HCT116 (cell line): ENCODE measurements at regions of chr19 and their contacts with region 1.

Region 1: DNA sequence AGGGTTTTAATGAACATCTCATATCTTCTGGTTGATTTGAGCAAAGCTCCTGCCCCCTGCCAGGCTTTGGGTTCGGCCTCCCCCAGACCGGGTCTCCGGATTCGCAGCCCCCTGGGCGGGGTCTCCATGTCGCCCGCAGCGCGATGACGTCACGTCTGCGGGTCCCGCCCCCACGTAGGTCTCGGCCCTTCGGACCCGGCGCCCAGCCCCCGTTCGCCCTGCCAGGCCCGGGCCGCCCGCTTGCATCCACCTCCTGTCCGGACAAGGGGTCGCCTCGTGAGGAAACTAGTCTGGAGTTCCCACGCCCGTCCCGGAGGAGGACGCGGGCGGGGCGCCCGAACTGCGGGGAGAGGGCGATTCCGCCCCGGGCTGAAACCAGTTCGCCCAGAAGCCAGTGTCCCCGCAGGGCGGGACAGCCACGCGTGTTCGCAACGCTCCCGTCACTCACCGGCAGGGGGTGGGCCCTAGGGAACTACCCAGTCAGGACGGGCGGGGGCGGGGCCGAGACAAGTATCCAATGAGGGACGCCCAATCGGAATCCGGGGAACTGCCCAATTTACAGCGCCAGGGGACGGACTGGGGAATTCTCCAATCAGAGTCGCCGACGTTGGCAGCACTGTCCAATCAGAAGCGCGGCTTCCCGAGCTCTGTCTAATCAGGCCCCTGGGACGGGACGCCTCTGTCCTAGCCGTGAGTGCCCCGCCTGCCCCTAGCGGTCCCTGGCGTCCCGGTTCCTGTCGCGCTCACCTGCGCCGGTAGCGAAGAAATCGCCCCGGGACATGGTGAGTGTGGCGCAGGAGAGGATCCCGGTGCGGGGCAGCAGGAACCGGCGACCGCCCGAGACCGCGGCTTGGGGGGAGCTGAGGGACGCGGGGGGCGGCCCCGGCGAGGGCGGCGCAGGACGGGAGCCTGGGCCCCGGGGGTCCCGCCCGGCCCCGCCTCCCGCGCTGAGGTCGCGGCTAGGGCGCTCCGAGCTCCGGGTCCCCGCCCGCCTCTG is at the start of gene ZNF555:
- DNase-seq: peak; percentile 98
- ATAC-seq: peak; percentile 99
- H3K4me3 ChIP-seq: peak within 1 kb of the TSS; percentile 53 to 64
- H3K27ac ChIP-seq: peak within 1 kb of the TSS; percentile 67; the same call in 1 of the 2 replicates
- H3K4me1 ChIP-seq: peaks cover 0 to 12% of the 10 kb centered on the region in 2 experiments; a peak in 2 of 4 replicates
- H3K27me3 ChIP-seq: no peaks in the 10 kb centered on the region
- CTCF ChIP-seq: peak in 2 of 3 experiments; percentile 33 to 56; a peak in 3 of 6 replicates
- POLR2A ChIP-seq: no peak
- RAD21 ChIP-seq: no peak
- total RNA-seq, gene ZNF555: 4.5 TPM

Region 2: DNA sequence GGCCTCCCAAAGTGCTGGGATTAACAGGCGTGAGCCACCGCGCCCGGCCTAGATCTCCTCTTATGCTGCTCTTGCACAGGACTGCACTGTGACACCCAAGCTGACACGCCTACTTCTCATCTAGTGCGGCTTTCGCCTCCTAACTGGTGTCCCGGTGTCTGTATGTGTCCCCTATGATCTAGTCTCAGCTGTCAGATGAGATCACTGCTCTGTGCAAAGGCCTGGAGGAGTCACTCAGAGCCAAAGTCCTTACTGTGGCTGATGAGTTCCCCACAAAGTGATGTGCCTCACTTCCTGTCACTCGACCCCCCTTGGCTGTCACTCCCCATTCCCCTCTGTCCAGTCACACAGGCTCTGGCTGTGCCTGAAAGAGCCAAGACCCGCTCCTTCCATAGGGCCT is 28.5 kb after region 1 on chr19:
- CTCF ChIA-PET with region 1: no interaction called
- POLR2A ChIA-PET with region 1: no interaction called
- RAD21 ChIA-PET with region 1: no interaction called
- intact Hi-C with region 1: no loop called
- DNase-seq: no peak
- ATAC-seq: no peak
- H3K4me3 ChIP-seq: no peak overlapping the region
- H3K27ac ChIP-seq: no peak overlapping the region
- H3K4me1 ChIP-seq: no peaks in the 10 kb centered on the region
- H3K27me3 ChIP-seq: no peaks in the 10 kb centered on the region
- CTCF ChIP-seq: no peak
- POLR2A ChIP-seq: no peak
- RAD21 ChIP-seq: no peak

Region 3: DNA sequence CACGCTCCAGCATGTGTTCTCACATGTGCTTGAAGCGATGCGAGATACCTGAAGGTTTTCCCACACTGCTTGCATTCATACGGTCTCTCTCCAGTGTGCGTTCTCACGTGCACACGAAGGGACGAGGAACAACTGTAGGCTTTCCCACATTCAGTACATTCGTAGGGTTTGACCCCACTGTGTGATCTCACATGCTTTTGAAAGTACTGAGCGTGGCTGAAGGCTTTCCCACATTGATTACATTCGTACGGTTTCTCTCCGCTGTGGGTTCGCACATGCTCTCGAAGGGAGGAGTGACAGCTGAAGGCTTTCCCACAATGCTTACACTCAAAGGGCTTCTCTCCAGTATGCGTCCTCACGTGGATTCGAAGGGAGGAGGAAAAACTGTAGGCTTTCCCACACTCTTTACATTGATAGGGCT is 92.4 kb after region 1 on chr19:
- CTCF ChIA-PET with region 1: no interaction called
- POLR2A ChIA-PET with region 1: no interaction called
- RAD21 ChIA-PET with region 1: no interaction called
- intact Hi-C with region 1: loop called (anchors 10 kb)
- DNase-seq: no peak
- ATAC-seq: no peak
- H3K4me3 ChIP-seq: no peak overlapping the region
- H3K27ac ChIP-seq: no peak overlapping the region
- H3K4me1 ChIP-seq: no peaks in the 10 kb centered on the region
- H3K27me3 ChIP-seq: no peaks in the 10 kb centered on the region
- CTCF ChIP-seq: no peak
- POLR2A ChIP-seq: no peak
- RAD21 ChIP-seq: no peak